Naive thymus-derived CD4-positive, alpha-beta T cell (primary cell): ENCODE measurements at regions of chr1 and their contacts with region 1.

Region 1: GRCh38 chr1:222465211-222466041 is 82.5 kb downstream of the HHIPL2 start:
- DNase-seq: peak; percentile 57 to 89 (median 84)
- ATAC-seq: peak; percentile 99
- H3K4me3 ChIP-seq: peak overlapping the region; percentile 86
- H3K4me3 Mint-ChIP-seq: peak overlapping the region; percentile 79 to 92 (median 86)
- H3K27ac ChIP-seq: peak overlapping the region; percentile 64
- H3K27ac Mint-ChIP-seq: peak overlapping the region; percentile 80 to 96 (median 90)
- H3K4me1 ChIP-seq: peaks cover 5 to 6% of the 10 kb centered on the region in 2 donors
- H3K4me1 Mint-ChIP-seq: peaks cover 11 to 25% (median 13%) of the 10 kb centered on the region in 7 donors
- H3K27me3 ChIP-seq: no peaks in the 10 kb centered on the region
- H3K27me3 Mint-ChIP-seq: peaks cover 0 to 18% (median 0%) of the 10 kb centered on the region in 5 donors

Region 2: GRCh38 chr1:222589462-222590302 is 124.3 kb after region 1 on chr1 and contains the start of gene TAF1A:
- CTCF ChIA-PET with region 1: no interaction called
- POLR2A ChIA-PET with region 1: interaction called, 7 read pairs
- intact Hi-C with region 1: loop called (anchors 1 kb)
- DNase-seq: peak; percentile 53 to 92 (median 87)
- ATAC-seq: peak; percentile 100
- H3K4me3 ChIP-seq: peak within 1 kb of the TSS; percentile 93
- H3K4me3 Mint-ChIP-seq: peak within 1 kb of the TSS; percentile 86 to 99 (median 96)
- H3K27ac ChIP-seq: peak within 1 kb of the TSS; percentile 85
- H3K27ac Mint-ChIP-seq: peak within 1 kb of the TSS; percentile 94 to 99 (median 97)
- H3K4me1 ChIP-seq: peaks cover 6 to 18% of the 10 kb centered on the region in 2 donors
- H3K4me1 Mint-ChIP-seq: peaks cover 21 to 68% (median 57%) of the 10 kb centered on the region in 7 donors
- H3K27me3 ChIP-seq: no peaks in the 10 kb centered on the region
- H3K27me3 Mint-ChIP-seq: peaks cover 0 to 4% (median 0%) of the 10 kb centered on the region in 5 donors
- total RNA-seq, gene TAF1A: 6.5 to 17.9 (median 9.3) TPM

Region 3: GRCh38 chr1:222643938-222644635 is 178.7 kb after region 1 on chr1:
- CTCF ChIA-PET with region 1: no interaction called
- POLR2A ChIA-PET with region 1: interaction called, 4 read pairs
- intact Hi-C with region 1: loop called in 1 of 2 experiments (anchors 2 kb)
- DNase-seq: peak; percentile 93 to 98 (median 96)
- ATAC-seq: peak; percentile 97
- H3K4me3 ChIP-seq: peak overlapping the region; percentile 99
- H3K4me3 Mint-ChIP-seq: peak overlapping the region; percentile 87 to 99 (median 97)
- H3K27ac ChIP-seq: peak overlapping the region; percentile 92
- H3K27ac Mint-ChIP-seq: peak overlapping the region; percentile 95 to 99 (median 98)
- H3K4me1 ChIP-seq: peaks cover 12% of the 10 kb centered on the region in 2 donors
- H3K4me1 Mint-ChIP-seq: peaks cover 12 to 59% (median 49%) of the 10 kb centered on the region in 7 donors
- H3K27me3 ChIP-seq: no peaks in the 10 kb centered on the region
- H3K27me3 Mint-ChIP-seq: no peaks in the 10 kb centered on the region

Region 4: DNA sequence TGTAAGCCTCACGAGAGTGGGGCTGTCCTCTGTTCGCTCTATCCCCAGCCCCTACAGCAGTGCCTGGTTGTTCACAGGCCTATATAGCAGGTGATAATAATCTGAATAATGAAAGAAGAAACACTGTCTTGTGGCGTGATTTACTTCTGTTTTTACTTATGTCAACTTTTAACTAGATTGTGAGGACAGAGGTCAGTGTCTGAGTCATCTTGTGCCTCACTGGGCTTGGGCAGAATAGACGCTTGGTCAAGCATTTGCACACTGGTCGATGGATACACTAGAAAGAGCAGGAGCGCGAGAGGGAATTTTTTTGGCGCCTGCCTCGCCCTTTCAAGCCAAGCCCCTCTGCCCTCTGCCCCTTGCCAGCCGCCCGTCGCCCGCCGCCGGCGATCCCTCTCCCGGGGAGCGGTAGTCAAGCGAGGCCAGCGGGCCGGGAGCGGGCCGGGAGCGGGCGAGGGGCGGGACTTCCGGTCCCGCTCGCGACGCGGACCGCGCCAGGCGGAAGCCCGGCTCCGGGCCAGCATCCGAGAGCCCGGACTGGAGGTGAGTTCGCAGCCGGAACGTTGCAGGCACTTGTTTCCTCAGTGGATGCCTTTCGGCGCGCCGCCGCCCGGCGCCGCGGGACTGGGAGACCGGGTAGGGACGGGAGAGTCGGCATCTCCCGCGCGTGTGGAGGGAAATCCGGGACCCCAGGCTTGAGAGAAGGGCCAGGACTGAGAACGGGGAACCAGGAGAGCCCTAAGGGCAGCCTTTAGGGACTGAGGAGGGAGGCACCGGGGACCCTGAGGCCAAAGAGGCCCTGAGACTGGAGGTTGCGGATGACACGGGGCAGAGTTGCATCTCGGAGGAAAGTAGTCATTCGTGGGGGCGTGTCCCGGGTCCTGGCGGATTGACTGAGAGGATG is 349.4 kb after region 1 on chr1 and contains the start of gene DISP1:
- CTCF ChIA-PET with region 1: interaction called, 3 read pairs
- POLR2A ChIA-PET with region 1: no interaction called
- intact Hi-C with region 1: loop called in 1 of 2 experiments (anchors 10 kb)
- DNase-seq: peak; percentile 46 to 71 (median 60)
- ATAC-seq: peak; percentile 90
- H3K4me3 ChIP-seq: peak within 1 kb of the TSS; percentile 77
- H3K4me3 Mint-ChIP-seq: peak within 1 kb of the TSS; percentile 87 to 97 (median 95)
- H3K27ac ChIP-seq: peak within 1 kb of the TSS; percentile 78
- H3K27ac Mint-ChIP-seq: peak within 1 kb of the TSS; percentile 79 to 96 (median 89)
- H3K4me1 ChIP-seq: no peaks in the 10 kb centered on the region
- H3K4me1 Mint-ChIP-seq: peaks cover 17 to 37% (median 29%) of the 10 kb centered on the region in 7 donors
- H3K27me3 ChIP-seq: no peaks in the 10 kb centered on the region
- H3K27me3 Mint-ChIP-seq: peaks cover 0 to 13% (median 0%) of the 10 kb centered on the region in 5 donors
- total RNA-seq, gene DISP1: 1.7 to 4.6 (median 3.0) TPM

Region 5: GRCh38 chr1:223123011-223123610 is 657.7 kb after region 1 on chr1:
- CTCF ChIA-PET with region 1: interaction called, 8 read pairs
- POLR2A ChIA-PET with region 1: no interaction called
- intact Hi-C with region 1: loop called (anchors 1 kb)
- DNase-seq: no peak
- ATAC-seq: no peak
- H3K4me3 ChIP-seq: peak overlapping the region; percentile 39
- H3K4me3 Mint-ChIP-seq: peak overlapping the region; percentile 48 to 90 (median 66)
- H3K27ac ChIP-seq: no peak overlapping the region
- H3K27ac Mint-ChIP-seq: peak overlapping the region in 1 of 9 donors; percentile 23
- H3K4me1 ChIP-seq: peaks cover 0 to 5% of the 10 kb centered on the region in 2 donors
- H3K4me1 Mint-ChIP-seq: peaks cover 0 to 11% (median 9%) of the 10 kb centered on the region in 7 donors
- H3K27me3 ChIP-seq: no peaks in the 10 kb centered on the region
- H3K27me3 Mint-ChIP-seq: peaks cover 0 to 11% (median 0%) of the 10 kb centered on the region in 5 donors

Region 6: GRCh38 chr1:223298701-223299100 is 833.3 kb after region 1 on chr1:
- CTCF ChIA-PET with region 1: no interaction called
- POLR2A ChIA-PET with region 1: no interaction called
- intact Hi-C with region 1: no loop called
- DNase-seq: no peak
- ATAC-seq: no peak
- H3K4me3 ChIP-seq: no peak overlapping the region
- H3K4me3 Mint-ChIP-seq: no peak overlapping the region
- H3K27ac ChIP-seq: no peak overlapping the region
- H3K27ac Mint-ChIP-seq: no peak overlapping the region
- H3K4me1 ChIP-seq: peaks cover 0 to 21% of the 10 kb centered on the region in 2 donors
- H3K4me1 Mint-ChIP-seq: peaks cover 0 to 37% (median 27%) of the 10 kb centered on the region in 7 donors
- H3K27me3 ChIP-seq: no peaks in the 10 kb centered on the region
- H3K27me3 Mint-ChIP-seq: no peaks in the 10 kb centered on the region